Activated CD4-positive, alpha-beta memory T cell treated with anti-CD3 and anti-CD28 coated beads for 36 hours (primary cell): ENCODE measurements at regions of chr7 and their contacts with region 1.

Region 1: DNA sequence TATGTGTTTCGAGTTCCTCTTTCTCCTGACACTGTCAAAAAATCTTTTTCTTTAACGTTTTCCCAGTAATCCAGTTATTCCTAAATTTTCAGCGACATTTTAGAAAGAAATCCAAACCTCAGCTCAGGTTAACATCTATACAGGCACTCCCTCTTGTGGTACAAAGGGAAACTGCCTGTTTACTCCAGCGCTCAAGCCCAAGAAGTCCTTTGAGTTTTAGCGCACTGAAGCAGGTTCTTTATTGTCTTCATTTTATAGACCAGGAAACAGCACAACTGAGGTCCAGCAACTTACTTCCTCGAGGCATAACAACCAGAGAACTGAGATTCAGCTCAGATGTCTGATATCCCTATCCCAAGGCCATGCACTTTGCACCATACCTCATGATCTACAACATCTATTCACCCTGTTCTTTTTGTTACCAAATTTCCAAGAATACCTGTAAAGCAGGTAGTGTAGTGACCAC is 287.2 kb upstream of the MKLN1 start:
- DNase-seq: peak; percentile 59
- H3K4me3 Mint-ChIP-seq: no peak overlapping the region
- H3K27ac Mint-ChIP-seq: peak overlapping the region; percentile 78
- H3K4me1 Mint-ChIP-seq: peaks cover 71% of the 10 kb centered on the region
- H3K27me3 Mint-ChIP-seq: no peaks in the 10 kb centered on the region

Region 2: DNA sequence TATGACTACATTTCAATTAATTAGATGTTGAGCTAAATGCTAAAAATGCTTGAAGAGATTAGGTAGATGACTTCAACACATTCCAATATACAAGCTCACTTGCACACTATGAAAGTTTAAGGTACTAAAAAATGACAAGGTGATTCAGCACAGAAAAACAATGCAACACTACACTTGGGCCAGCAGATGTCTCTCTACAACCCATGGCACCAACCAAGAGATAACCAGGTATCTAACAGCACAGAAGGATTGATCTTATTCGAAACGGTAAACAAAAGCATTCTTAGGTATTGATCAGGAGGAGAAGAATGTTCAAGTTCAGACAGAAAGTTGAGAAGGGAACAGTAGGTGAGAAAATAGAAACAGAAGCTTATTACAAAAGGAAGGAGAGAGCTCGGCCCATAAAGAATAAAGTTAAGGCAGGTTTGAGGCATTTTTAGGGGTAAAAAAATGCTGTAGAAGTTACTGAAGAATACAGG is 58.3 kb before region 1 on chr7:
- CTCF ChIA-PET with region 1: interaction called, 90 read pairs
- POLR2A ChIA-PET with region 1: interaction called, 6 read pairs
- intact Hi-C with region 1: loop called (anchors 1 kb)
- DNase-seq: peak; percentile 48
- H3K4me3 Mint-ChIP-seq: no peak overlapping the region
- H3K27ac Mint-ChIP-seq: no peak overlapping the region
- H3K4me1 Mint-ChIP-seq: peaks cover 59% of the 10 kb centered on the region
- H3K27me3 Mint-ChIP-seq: no peaks in the 10 kb centered on the region

Region 3: GRCh38 chr7:130996841-130997231 is 43.7 kb before region 1 on chr7:
- CTCF ChIA-PET with region 1: interaction called, 13 read pairs
- POLR2A ChIA-PET with region 1: no interaction called
- intact Hi-C with region 1: no loop called
- DNase-seq: peak; percentile 73
- H3K4me3 Mint-ChIP-seq: peak overlapping the region; percentile 55
- H3K27ac Mint-ChIP-seq: peak overlapping the region; percentile 94
- H3K4me1 Mint-ChIP-seq: peaks cover 90% of the 10 kb centered on the region
- H3K27me3 Mint-ChIP-seq: no peaks in the 10 kb centered on the region

Region 4: DNA sequence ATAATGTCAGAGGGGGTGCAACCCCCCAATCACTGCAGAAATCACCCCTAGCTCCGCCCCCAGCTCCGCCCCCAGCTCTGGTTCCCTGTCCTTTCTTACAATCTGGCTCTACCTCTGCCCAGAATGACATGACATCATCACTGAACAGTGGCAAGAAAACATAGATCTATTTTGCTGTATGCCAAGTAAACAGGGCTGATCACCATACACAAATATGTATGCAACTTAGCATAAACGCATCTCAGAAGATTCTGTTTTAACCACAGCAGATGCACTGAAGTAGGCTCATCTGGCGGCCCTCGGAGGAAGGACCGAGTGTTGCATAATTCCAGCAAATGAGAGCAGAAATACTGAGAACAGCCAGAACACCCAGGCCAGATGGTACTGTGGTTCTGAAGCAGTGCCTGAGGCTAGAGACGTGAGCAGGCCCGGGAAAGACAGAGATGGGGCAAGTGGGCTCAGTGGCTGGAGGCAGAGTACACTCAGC is 13.2 kb before region 1 on chr7:
- CTCF ChIA-PET with region 1: interaction called, 13 read pairs
- POLR2A ChIA-PET with region 1: interaction called, 3 read pairs
- intact Hi-C with region 1: no loop called
- DNase-seq: peak; percentile 66
- H3K4me3 Mint-ChIP-seq: peak overlapping the region; percentile 36
- H3K27ac Mint-ChIP-seq: peak overlapping the region; percentile 79
- H3K4me1 Mint-ChIP-seq: peaks cover 87% of the 10 kb centered on the region
- H3K27me3 Mint-ChIP-seq: no peaks in the 10 kb centered on the region

Region 5: GRCh38 chr7:131071786-131072504 is 31.4 kb after region 1 on chr7:
- CTCF ChIA-PET with region 1: interaction called, 10 read pairs
- POLR2A ChIA-PET with region 1: no interaction called
- intact Hi-C with region 1: no loop called
- DNase-seq: peak; percentile 31
- H3K4me3 Mint-ChIP-seq: no peak overlapping the region
- H3K27ac Mint-ChIP-seq: peak overlapping the region; percentile 70
- H3K4me1 Mint-ChIP-seq: peaks cover 83% of the 10 kb centered on the region
- H3K27me3 Mint-ChIP-seq: no peaks in the 10 kb centered on the region